Activated B cell treated with CpG ODN at 0.5 μM for 24 hours (primary cell): ENCODE measurements at regions of chr10 and their contacts with region 1.

Region 1: DNA sequence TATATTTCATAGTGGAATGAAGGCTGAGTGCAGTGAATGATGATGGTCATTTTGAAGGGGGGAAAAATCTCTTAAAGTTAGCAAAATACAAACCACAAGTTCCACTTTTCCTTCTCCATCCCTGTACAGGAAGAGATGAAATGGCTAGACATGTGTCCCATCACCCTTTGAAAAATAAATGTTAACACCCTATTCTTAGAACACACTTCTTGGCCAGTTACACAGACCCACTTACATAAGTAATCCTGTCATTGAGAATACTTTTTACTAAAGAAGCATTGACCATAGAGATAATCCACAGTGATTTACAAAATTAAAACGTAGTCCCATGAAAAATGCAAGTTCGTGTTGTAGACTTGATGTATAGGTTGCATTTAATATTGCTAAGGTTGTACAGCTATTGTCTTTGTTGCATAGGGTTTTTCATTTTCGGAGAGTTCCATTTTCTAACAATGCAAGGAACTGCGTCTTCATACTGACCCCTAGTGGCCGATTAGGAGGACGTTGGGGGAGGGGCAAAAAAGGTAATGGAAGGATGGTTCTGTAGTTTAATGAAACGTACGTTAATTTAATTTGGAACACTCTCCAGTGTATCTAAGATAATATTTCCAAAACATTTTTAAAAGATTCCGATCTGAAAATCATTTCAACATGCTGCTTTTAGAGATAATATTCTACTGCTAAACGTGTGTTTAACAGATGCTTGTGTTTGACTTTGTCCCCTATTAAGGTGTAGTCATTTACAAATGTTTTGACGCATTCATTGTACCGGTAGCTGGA is 60.9 kb downstream of the ARMC3 start:
- DNase-seq: peak; percentile 28
- ATAC-seq: peak; percentile 70
- H3K4me3 Mint-ChIP-seq: no peak overlapping the region
- H3K27ac Mint-ChIP-seq: peak overlapping the region; percentile 10
- H3K4me1 Mint-ChIP-seq: peaks cover 8% of the 10 kb centered on the region
- H3K27me3 Mint-ChIP-seq: peaks cover 11% of the 10 kb centered on the region
- CTCF ChIP-seq: peak; percentile 37

Region 2: DNA sequence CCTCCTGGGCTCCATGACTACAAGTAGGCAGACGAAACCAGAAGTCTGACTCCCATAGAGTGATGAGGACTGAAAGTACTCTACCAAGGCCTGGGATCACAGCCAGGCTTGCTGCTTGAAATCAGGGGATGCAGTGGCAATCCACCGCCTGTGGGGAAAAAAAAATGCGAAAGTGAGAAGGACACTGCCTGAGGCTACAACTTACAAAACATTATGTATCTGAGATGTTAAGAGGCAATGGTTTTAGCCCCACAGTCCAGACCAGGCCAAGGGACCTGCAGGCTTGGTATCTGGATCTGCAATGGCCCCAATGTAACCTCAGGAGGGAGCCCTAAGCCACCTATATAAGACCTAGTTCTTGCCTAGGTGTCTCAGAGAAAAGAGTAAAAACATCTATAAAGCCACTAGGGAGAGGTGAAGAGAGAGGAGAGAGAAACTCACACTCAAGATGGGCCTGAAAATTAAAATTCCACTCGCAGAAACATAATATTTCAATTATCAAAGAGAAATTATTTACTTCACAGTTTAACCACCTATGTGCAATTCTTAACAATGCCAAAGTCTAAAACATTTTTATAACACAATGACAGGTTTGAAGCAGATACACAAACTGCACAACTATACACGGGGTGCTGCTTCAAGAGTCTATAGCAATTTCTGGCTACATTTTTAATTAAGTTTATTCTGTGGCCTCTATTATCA is 999.2 kb before region 1 on chr10:
- CTCF ChIA-PET with region 1: interaction called, 71 read pairs
- POLR2A ChIA-PET with region 1: no interaction called
- intact Hi-C with region 1: loop called (anchors 1 kb)
- DNase-seq: no peak
- ATAC-seq: peak; percentile 68
- H3K4me3 Mint-ChIP-seq: no peak overlapping the region
- H3K27ac Mint-ChIP-seq: no peak overlapping the region
- H3K4me1 Mint-ChIP-seq: no peaks in the 10 kb centered on the region
- H3K27me3 Mint-ChIP-seq: no peaks in the 10 kb centered on the region
- CTCF ChIP-seq: no peak

Region 3: DNA sequence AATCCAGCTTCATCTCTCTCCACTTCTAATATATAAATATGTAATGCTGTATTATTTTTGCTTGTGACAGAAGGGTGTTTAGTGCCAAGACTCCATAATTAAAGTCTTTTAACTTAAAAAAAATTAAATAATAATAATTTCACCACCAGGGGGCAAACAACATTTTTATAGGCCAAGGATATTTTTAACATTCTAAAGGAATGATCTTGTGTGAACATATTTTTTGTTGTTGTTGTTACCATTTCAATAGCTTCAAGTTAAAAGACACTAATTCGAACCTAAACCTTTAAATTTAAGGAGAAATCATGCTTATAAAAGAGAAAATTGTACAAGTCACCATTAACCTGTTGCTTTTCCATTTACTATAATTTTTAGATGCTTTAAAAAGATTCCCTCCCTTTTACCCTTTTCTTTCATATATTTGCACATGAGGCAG is 977.8 kb before region 1 on chr10:
- CTCF ChIA-PET with region 1: interaction called, 45 read pairs
- POLR2A ChIA-PET with region 1: interaction called, 15 read pairs
- intact Hi-C with region 1: loop called (anchors 1 kb)
- DNase-seq: no peak
- ATAC-seq: no peak
- H3K4me3 Mint-ChIP-seq: no peak overlapping the region
- H3K27ac Mint-ChIP-seq: no peak overlapping the region
- H3K4me1 Mint-ChIP-seq: peaks cover 11% of the 10 kb centered on the region
- H3K27me3 Mint-ChIP-seq: no peaks in the 10 kb centered on the region
- CTCF ChIP-seq: peak; percentile 86

Region 4: DNA sequence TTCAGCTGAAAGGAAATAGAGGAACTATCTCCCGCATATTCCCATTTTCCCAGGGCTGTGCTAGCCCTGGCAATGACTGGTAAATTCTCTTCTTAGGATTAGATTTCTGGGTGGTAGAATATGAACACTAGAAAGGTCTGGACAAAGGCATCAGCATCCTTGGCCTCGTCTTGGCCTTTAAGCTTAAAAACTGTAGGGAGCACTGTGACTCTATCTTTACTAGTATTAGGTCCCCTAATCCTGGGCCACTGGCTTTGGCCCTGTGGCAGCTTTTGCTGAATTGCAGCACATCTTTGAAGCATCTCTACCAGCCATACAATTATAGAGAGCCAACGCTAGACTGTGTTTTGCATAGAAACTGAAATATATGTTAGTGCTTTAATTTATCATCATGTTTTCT is 729.5 kb before region 1 on chr10:
- CTCF ChIA-PET with region 1: interaction called, 3 read pairs
- POLR2A ChIA-PET with region 1: no interaction called
- intact Hi-C with region 1: loop called (anchors 1 kb)
- DNase-seq: no peak
- ATAC-seq: peak; percentile 52
- H3K4me3 Mint-ChIP-seq: no peak overlapping the region
- H3K27ac Mint-ChIP-seq: no peak overlapping the region
- H3K4me1 Mint-ChIP-seq: peaks cover 3% of the 10 kb centered on the region
- H3K27me3 Mint-ChIP-seq: peaks cover 10% of the 10 kb centered on the region
- CTCF ChIP-seq: no peak

Region 5: DNA sequence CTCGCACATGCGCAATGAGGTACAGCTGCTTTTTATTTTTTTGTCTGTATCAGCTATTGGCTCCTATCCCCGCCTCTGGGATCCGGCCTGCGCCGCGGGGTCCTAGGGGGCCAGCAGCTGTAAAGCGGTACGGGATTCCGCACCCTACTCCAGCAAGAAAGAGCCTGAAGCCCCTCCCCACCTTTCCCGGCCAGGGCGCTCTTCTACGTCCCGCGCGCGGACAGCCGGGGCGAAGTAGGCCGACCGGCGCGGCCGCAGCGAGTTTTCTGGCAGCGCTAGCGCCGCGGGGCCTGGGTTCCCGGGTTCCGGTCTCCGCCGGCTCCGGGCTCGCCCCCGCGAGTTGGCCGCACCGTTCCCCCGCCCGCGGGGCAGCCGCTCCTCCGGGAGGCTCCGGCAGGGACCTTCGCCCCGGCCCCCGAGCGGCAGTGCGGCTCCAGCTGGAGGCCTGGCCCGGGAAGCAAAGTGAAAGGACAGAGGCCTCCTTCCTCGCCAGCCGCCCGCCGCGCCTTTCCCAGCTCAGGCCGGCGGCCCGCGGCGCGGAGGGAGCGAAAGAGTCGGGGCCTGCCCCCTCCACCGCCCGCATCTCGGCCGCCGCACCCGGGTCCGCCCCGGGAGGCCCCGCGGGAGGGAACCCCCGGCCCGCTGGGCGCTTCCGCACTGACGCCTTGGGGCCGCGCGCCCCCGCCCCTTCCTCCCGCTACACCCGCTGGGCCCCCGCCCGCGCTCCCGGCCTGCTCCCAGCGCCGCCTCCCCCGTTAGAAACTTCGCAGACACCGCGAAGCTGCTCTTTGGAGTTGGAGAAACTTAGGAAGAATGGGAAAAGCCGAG is 648.2 kb before region 1 on chr10:
- CTCF ChIA-PET with region 1: interaction called, 8 read pairs
- POLR2A ChIA-PET with region 1: interaction called, 3 read pairs
- intact Hi-C with region 1: loop called (anchors 2 kb)
- DNase-seq: peak; percentile 77
- ATAC-seq: peak; percentile 61
- H3K4me3 Mint-ChIP-seq: peak overlapping the region; percentile 90
- H3K27ac Mint-ChIP-seq: peak overlapping the region; percentile 88
- H3K4me1 Mint-ChIP-seq: peaks cover 34% of the 10 kb centered on the region
- H3K27me3 Mint-ChIP-seq: peaks cover 45% of the 10 kb centered on the region
- CTCF ChIP-seq: no peak

Region 6: GRCh38 chr10:22573820-22574569 is 414.8 kb before region 1 on chr10:
- CTCF ChIA-PET with region 1: interaction called, 75 read pairs
- POLR2A ChIA-PET with region 1: no interaction called
- intact Hi-C with region 1: loop called (anchors 1 kb)
- DNase-seq: no peak
- ATAC-seq: peak; percentile 34
- H3K4me3 Mint-ChIP-seq: no peak overlapping the region
- H3K27ac Mint-ChIP-seq: peak overlapping the region; percentile 63
- H3K4me1 Mint-ChIP-seq: peaks cover 8% of the 10 kb centered on the region
- H3K27me3 Mint-ChIP-seq: no peaks in the 10 kb centered on the region
- CTCF ChIP-seq: no peak

Region 7: DNA sequence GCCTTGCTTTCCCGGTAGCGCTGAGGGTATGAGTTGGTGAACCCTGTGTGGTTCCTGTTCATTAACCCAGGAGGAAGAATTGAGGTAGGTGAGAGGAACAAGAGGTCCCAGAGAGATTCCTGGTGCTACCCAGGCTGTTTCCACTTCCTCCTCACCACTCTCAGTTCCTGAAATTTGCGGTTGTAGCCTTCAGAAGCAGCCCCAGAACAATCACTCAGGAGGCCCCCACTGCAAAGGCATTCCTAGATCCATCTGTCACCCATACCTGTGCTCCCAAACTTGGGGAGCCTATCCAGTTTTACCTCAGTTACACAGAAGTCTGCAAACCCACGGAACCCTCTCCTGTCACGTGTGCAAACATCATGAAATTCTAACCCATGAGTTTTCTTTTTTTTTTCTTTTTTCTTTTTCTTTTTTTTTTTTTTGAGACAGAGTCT is 265.4 kb before region 1 on chr10:
- CTCF ChIA-PET with region 1: no interaction called
- POLR2A ChIA-PET with region 1: no interaction called
- intact Hi-C with region 1: loop called (anchors 5 kb)
- DNase-seq: peak; percentile 50
- ATAC-seq: peak; percentile 91
- H3K4me3 Mint-ChIP-seq: peak overlapping the region; percentile 80
- H3K27ac Mint-ChIP-seq: peak overlapping the region; percentile 83
- H3K4me1 Mint-ChIP-seq: peaks cover 57% of the 10 kb centered on the region
- H3K27me3 Mint-ChIP-seq: no peaks in the 10 kb centered on the region
- CTCF ChIP-seq: no peak

Region 8: GRCh38 chr10:23035569-23035968 is 46.8 kb after region 1 on chr10:
- CTCF ChIA-PET with region 1: no interaction called
- POLR2A ChIA-PET with region 1: no interaction called
- intact Hi-C with region 1: no loop called
- DNase-seq: no peak
- ATAC-seq: no peak
- H3K4me3 Mint-ChIP-seq: no peak overlapping the region
- H3K27ac Mint-ChIP-seq: no peak overlapping the region
- H3K4me1 Mint-ChIP-seq: no peaks in the 10 kb centered on the region
- H3K27me3 Mint-ChIP-seq: peaks cover 7% of the 10 kb centered on the region
- CTCF ChIP-seq: no peak